ENCODE measurements at regions of chr1 and their contacts with region 1.

Region 1: DNA sequence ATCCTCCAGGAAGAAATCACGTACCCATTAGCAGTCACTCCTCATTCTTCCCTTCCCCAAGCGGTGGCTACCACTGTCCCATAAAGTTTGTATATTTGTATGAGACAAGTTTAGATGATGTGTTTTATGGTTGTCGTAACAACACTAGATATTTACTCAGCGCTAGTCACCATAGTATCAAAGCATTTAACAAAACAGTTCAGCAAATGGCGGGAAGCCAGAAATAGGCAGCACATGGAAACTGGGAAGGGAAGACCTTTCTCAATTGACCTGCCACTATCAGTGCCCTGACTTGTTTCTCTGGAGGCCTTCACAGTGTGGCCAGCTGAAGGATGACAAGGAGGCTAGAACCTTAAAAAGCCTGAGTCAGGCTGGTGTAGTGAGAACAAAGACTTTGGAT is 31.1 kb downstream of the CNST start:
- DNase-seq: no peak
- ATAC-seq: peak; percentile 28
- H3K4me3 ChIP-seq: no peak overlapping the region
- H3K4me3 Mint-ChIP-seq: peak overlapping the region in 4 of 10 donors; percentile 0 to 41 (median 8)
- H3K27ac ChIP-seq: no peak overlapping the region
- H3K27ac Mint-ChIP-seq: peak overlapping the region in 2 of 9 donors; percentile 67 to 70
- H3K4me1 ChIP-seq: peaks cover 0 to 18% of the 10 kb centered on the region in 2 donors
- H3K4me1 Mint-ChIP-seq: peaks cover 7 to 88% (median 76%) of the 10 kb centered on the region in 7 donors
- H3K27me3 ChIP-seq: no peaks in the 10 kb centered on the region
- H3K27me3 Mint-ChIP-seq: no peaks in the 10 kb centered on the region

Region 2: GRCh38 chr1:246609632-246610031 is 12.3 kb after region 1 on chr1:
- CTCF ChIA-PET with region 1: no interaction called
- POLR2A ChIA-PET with region 1: interaction called, 3 read pairs
- intact Hi-C with region 1: loop called in 1 of 2 experiments (anchors 2 kb)
- DNase-seq: no peak
- ATAC-seq: no peak
- H3K4me3 ChIP-seq: no peak overlapping the region
- H3K4me3 Mint-ChIP-seq: peak overlapping the region in 6 of 10 donors; percentile 8 to 48 (median 40)
- H3K27ac ChIP-seq: no peak overlapping the region
- H3K27ac Mint-ChIP-seq: peak overlapping the region in 7 of 9 donors; percentile 23 to 85 (median 72)
- H3K4me1 ChIP-seq: peaks cover 0 to 8% of the 10 kb centered on the region in 2 donors
- H3K4me1 Mint-ChIP-seq: peaks cover 33 to 85% (median 64%) of the 10 kb centered on the region in 7 donors
- H3K27me3 ChIP-seq: no peaks in the 10 kb centered on the region
- H3K27me3 Mint-ChIP-seq: no peaks in the 10 kb centered on the region

Region 3: DNA sequence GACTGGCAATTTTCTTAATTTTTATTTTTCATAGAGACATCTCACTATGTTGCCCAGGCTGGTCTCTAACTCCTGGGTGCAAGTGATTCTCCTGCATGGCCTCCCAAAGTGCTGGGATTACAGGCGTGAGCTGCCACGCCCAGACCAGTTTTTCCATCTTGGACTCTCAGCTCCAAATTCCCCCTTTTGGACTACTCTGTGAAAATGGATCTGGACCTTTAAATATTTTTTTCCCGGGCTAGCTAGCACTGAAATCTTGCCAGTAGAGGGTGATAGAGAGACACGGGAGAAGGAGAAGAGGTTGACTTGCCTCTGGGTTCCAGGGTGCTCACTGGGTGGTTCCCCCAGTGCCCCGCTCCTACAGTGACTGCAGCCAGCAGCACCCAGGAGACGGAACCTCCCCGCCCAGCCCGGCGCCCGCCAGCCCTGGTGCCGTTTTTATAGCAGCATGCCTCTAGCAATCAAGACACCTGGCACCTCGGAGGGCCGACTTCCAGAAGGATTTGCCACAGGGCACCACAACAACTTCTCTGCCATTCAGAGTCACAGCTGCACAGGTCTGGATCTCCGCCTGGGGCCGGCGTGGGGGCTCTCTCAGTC is 92.2 kb after region 1 on chr1:
- CTCF ChIA-PET with region 1: no interaction called
- POLR2A ChIA-PET with region 1: no interaction called
- intact Hi-C with region 1: no loop called
- DNase-seq: peak; percentile 10 to 55 (median 42)
- ATAC-seq: peak; percentile 98
- H3K4me3 ChIP-seq: no peak overlapping the region
- H3K4me3 Mint-ChIP-seq: peak overlapping the region in 2 of 10 donors; percentile 16 to 27
- H3K27ac ChIP-seq: no peak overlapping the region
- H3K27ac Mint-ChIP-seq: no peak overlapping the region
- H3K4me1 ChIP-seq: no peaks in the 10 kb centered on the region
- H3K4me1 Mint-ChIP-seq: peaks cover 0 to 5% (median 0%) of the 10 kb centered on the region in 7 donors
- H3K27me3 ChIP-seq: no peaks in the 10 kb centered on the region
- H3K27me3 Mint-ChIP-seq: no peaks in the 10 kb centered on the region